GM10248 (cell line): ENCODE measurements at regions of chr10 and their contacts with region 1.

Region 1: GRCh38 chr10:96395931-96396877 is 37.4 kb upstream of the OPALIN start:
- DNase-seq: peak; percentile 86
- CTCF ChIP-seq: peak; percentile 83

Region 2: GRCh38 chr10:96306516-96306915 is 89.7 kb before region 1 on chr10:
- CTCF ChIA-PET with region 1: no interaction called
- POLR2A ChIA-PET with region 1: no interaction called
- DNase-seq: no peak
- CTCF ChIP-seq: no peak

Region 3: GRCh38 chr10:96325719-96326373 is 70.4 kb before region 1 on chr10:
- CTCF ChIA-PET with region 1: no interaction called
- POLR2A ChIA-PET with region 1: no interaction called
- DNase-seq: peak; percentile 63
- CTCF ChIP-seq: no peak

Region 4: DNA sequence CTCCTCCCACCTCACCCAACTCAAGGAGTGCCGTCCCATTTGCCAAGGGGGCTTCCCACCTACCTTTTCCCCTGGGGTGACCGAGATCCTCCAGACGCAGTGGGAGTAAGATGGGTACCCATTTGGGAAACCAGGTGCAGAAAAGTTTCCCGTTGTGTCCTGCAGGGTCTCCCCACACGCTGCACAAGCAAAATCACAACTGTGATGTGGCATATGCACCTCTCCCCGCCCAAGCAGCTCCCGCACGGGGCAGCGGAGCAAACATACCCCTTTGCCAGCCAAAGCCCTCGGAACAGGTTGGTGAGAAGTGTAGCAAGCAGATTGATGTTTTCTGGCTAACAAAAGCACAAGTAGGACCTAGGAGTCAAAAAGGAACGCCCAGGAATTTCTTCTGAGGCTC is 14.1 kb after region 1 on chr10:
- CTCF ChIA-PET with region 1: interaction called, 23 read pairs
- POLR2A ChIA-PET with region 1: no interaction called
- DNase-seq: no peak
- CTCF ChIP-seq: no peak

Region 5: GRCh38 chr10:96416643-96417042 is 20.4 kb after region 1 on chr10:
- CTCF ChIA-PET with region 1: interaction called, 23 read pairs
- POLR2A ChIA-PET with region 1: no interaction called
- DNase-seq: no peak
- CTCF ChIP-seq: no peak